CD8-positive, alpha-beta T cell (primary cell): ENCODE measurements at regions of chr13 and their contacts with region 1.

Region 1: GRCh38 chr13:48532506-48533499 is at the start of gene RCBTB2:
- DNase-seq: peak; percentile 95 to 100 (median 99)
- ATAC-seq: peak; percentile 89
- H3K4me3 ChIP-seq: peak within 1 kb of the TSS; percentile 88 to 93
- H3K4me3 Mint-ChIP-seq: peak within 1 kb of the TSS; percentile 96
- H3K27ac ChIP-seq: peak within 1 kb of the TSS; percentile 90 to 97
- H3K27ac Mint-ChIP-seq: peak within 1 kb of the TSS; percentile 99
- H3K4me1 ChIP-seq: peaks cover 14% of the 10 kb centered on the region
- H3K4me1 Mint-ChIP-seq: peaks cover 23% of the 10 kb centered on the region
- H3K27me3 ChIP-seq: no peaks in the 10 kb centered on the region
- H3K27me3 Mint-ChIP-seq: no peaks in the 10 kb centered on the region
- CTCF ChIP-seq: no peak
- total RNA-seq, gene RCBTB2: 1.5 to 2.0 TPM

Region 2: GRCh38 chr13:48094781-48095502 is 437.9 kb before region 1 on chr13 and contains the start of gene MED4:
- CTCF ChIA-PET with region 1: no interaction called
- POLR2A ChIA-PET with region 1: interaction called, 3 read pairs
- intact Hi-C with region 1: loop called (anchors 2 to 10 kb)
- DNase-seq: peak; percentile 96 to 99 (median 97)
- ATAC-seq: peak; percentile 98
- H3K4me3 ChIP-seq: peak within 1 kb of the TSS; percentile 90 to 96
- H3K4me3 Mint-ChIP-seq: peak within 1 kb of the TSS; percentile 96
- H3K27ac ChIP-seq: peak within 1 kb of the TSS; percentile 90 to 92
- H3K27ac Mint-ChIP-seq: peak within 1 kb of the TSS; percentile 97
- H3K4me1 ChIP-seq: peaks cover 21% of the 10 kb centered on the region
- H3K4me1 Mint-ChIP-seq: peaks cover 45% of the 10 kb centered on the region
- H3K27me3 ChIP-seq: no peaks in the 10 kb centered on the region
- H3K27me3 Mint-ChIP-seq: no peaks in the 10 kb centered on the region
- CTCF ChIP-seq: peak; percentile 100
- total RNA-seq, gene MED4: 60.8 to 63.6 TPM

Region 3: GRCh38 chr13:48370815-48371214 is 162.0 kb before region 1 on chr13:
- CTCF ChIA-PET with region 1: no interaction called
- POLR2A ChIA-PET with region 1: no interaction called
- intact Hi-C with region 1: no loop called
- DNase-seq: no peak
- ATAC-seq: no peak
- H3K4me3 ChIP-seq: no peak overlapping the region
- H3K4me3 Mint-ChIP-seq: no peak overlapping the region
- H3K27ac ChIP-seq: no peak overlapping the region
- H3K27ac Mint-ChIP-seq: no peak overlapping the region
- H3K4me1 ChIP-seq: no peaks in the 10 kb centered on the region
- H3K4me1 Mint-ChIP-seq: no peaks in the 10 kb centered on the region
- H3K27me3 ChIP-seq: no peaks in the 10 kb centered on the region
- H3K27me3 Mint-ChIP-seq: no peaks in the 10 kb centered on the region
- CTCF ChIP-seq: no peak

Region 4: GRCh38 chr13:48492470-48493065 is 40.2 kb before region 1 on chr13:
- CTCF ChIA-PET with region 1: interaction called, 3 read pairs
- POLR2A ChIA-PET with region 1: interaction called, 15 read pairs
- intact Hi-C with region 1: loop called (anchors 1 to 5 kb)
- DNase-seq: peak; percentile 27 to 92 (median 73)
- ATAC-seq: peak; percentile 82
- H3K4me3 ChIP-seq: peak overlapping the region; percentile 48 to 60
- H3K4me3 Mint-ChIP-seq: no peak overlapping the region
- H3K27ac ChIP-seq: peak overlapping the region; percentile 63 to 86
- H3K27ac Mint-ChIP-seq: no peak overlapping the region
- H3K4me1 ChIP-seq: peaks cover 58% of the 10 kb centered on the region
- H3K4me1 Mint-ChIP-seq: peaks cover 39% of the 10 kb centered on the region
- H3K27me3 ChIP-seq: no peaks in the 10 kb centered on the region
- H3K27me3 Mint-ChIP-seq: no peaks in the 10 kb centered on the region
- CTCF ChIP-seq: no peak

Region 5: GRCh38 chr13:48515732-48516131 is 17.1 kb before region 1 on chr13:
- CTCF ChIA-PET with region 1: interaction called, 4 read pairs
- POLR2A ChIA-PET with region 1: interaction called, 12 read pairs
- intact Hi-C with region 1: no loop called
- DNase-seq: no peak
- ATAC-seq: no peak
- H3K4me3 ChIP-seq: no peak overlapping the region
- H3K4me3 Mint-ChIP-seq: no peak overlapping the region
- H3K27ac ChIP-seq: no peak overlapping the region
- H3K27ac Mint-ChIP-seq: no peak overlapping the region
- H3K4me1 ChIP-seq: no peaks in the 10 kb centered on the region
- H3K4me1 Mint-ChIP-seq: peaks cover under 1% of the 10 kb centered on the region
- H3K27me3 ChIP-seq: no peaks in the 10 kb centered on the region
- H3K27me3 Mint-ChIP-seq: no peaks in the 10 kb centered on the region
- CTCF ChIP-seq: no peak

Region 6: DNA sequence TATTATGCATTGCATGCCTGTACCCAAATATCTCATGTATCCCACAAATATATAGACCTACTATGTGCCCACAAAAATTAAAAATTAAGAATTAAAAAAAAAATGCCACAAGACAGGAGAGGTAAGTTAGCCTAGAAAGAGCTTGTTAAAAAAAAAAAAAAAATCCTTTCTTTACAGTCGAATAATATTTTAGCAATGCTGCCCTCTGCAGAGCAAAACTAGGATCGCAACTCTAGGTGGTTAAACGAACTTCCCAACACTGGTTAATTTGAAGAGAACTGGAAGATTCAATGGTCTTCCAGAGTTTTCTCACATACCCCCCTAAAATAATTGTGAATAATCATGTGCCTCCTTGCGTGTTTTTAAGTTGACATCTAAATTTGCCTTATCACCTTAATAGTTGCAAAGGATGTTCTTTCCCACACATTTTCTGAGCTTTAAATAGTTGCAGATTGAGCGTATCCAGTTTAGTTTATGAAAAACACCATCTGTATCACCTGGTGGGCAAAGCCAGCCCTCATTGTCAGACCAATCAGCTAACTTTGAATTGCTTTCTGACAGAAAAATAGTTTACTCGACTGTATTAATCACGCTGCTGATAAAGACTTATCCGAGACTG is 47.5 kb after region 1 on chr13:
- CTCF ChIA-PET with region 1: interaction called, 13 read pairs
- POLR2A ChIA-PET with region 1: no interaction called
- intact Hi-C with region 1: loop called in 1 of 2 experiments (anchors 1 kb)
- DNase-seq: peak; percentile 50 to 82 (median 79)
- ATAC-seq: peak; percentile 79
- H3K4me3 ChIP-seq: no peak overlapping the region
- H3K4me3 Mint-ChIP-seq: no peak overlapping the region
- H3K27ac ChIP-seq: no peak overlapping the region
- H3K27ac Mint-ChIP-seq: no peak overlapping the region
- H3K4me1 ChIP-seq: no peaks in the 10 kb centered on the region
- H3K4me1 Mint-ChIP-seq: peaks cover 3% of the 10 kb centered on the region
- H3K27me3 ChIP-seq: no peaks in the 10 kb centered on the region
- H3K27me3 Mint-ChIP-seq: peaks cover 30% of the 10 kb centered on the region
- CTCF ChIP-seq: peak; percentile 85

Region 7: DNA sequence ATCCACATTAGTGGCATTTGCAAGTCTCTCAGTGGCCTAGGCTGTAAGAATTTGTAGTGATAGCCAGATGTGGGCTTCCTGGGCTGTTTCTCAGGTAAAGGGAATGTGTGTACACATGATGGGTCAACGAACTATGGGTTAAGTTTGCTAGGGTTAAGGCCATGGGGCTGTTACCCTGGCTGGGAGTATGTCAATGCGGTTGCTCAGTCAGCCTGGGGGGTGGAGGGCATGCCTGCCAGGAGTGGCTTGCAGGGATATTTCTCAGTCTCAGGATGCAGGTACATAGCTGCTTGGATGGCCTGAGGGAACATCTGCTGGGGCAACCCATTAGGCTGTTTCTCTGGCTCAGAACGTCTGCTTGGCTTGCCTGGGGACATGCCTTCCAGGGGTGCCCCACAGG is 134.4 kb after region 1 on chr13:
- CTCF ChIA-PET with region 1: no interaction called
- POLR2A ChIA-PET with region 1: no interaction called
- intact Hi-C with region 1: no loop called
- DNase-seq: no peak
- ATAC-seq: no peak
- H3K4me3 ChIP-seq: no peak overlapping the region
- H3K4me3 Mint-ChIP-seq: no peak overlapping the region
- H3K27ac ChIP-seq: no peak overlapping the region
- H3K27ac Mint-ChIP-seq: no peak overlapping the region
- H3K4me1 ChIP-seq: no peaks in the 10 kb centered on the region
- H3K4me1 Mint-ChIP-seq: peaks cover 16% of the 10 kb centered on the region
- H3K27me3 ChIP-seq: no peaks in the 10 kb centered on the region
- H3K27me3 Mint-ChIP-seq: no peaks in the 10 kb centered on the region
- CTCF ChIP-seq: no peak

Region 8: DNA sequence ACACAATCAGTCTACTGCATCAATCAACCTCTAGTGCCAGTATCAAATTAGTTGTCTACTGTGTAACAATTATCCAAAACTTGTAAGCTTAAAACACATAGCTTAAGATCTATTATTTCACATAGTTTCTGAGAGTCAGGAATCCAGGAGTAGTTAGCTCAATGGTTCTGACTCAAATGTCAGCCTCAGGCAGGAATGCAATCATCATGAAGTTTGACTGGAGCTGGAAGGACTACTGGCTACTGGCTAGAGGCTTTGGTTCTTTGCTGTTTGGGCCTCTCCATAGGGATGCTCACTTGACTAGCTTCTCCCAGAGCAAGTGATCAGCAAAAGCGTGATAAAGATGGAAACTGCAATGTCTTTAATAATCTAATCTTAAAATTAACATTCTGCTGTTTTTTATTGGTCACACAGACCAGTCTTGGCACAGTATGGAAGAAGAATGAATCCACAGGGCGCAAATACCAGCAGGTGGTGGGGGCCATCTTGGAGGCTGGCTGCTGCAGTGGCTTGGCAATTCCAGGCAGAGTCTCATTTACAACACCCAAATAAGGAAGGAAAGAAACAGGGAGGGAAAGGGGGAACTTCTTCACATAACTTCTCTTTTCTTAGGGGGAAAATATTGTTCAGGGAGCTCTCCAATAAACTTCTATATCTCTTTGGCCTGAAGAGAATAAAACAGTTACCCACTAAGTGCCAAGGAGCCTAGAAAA is 895.4 kb after region 1 on chr13:
- CTCF ChIA-PET with region 1: no interaction called
- POLR2A ChIA-PET with region 1: no interaction called
- intact Hi-C with region 1: no loop called
- DNase-seq: no peak
- ATAC-seq: no peak
- H3K4me3 ChIP-seq: no peak overlapping the region
- H3K4me3 Mint-ChIP-seq: no peak overlapping the region
- H3K27ac ChIP-seq: no peak overlapping the region
- H3K27ac Mint-ChIP-seq: no peak overlapping the region
- H3K4me1 ChIP-seq: no peaks in the 10 kb centered on the region
- H3K4me1 Mint-ChIP-seq: no peaks in the 10 kb centered on the region
- H3K27me3 ChIP-seq: no peaks in the 10 kb centered on the region
- H3K27me3 Mint-ChIP-seq: no peaks in the 10 kb centered on the region
- CTCF ChIP-seq: no peak

Region 9: GRCh38 chr13:49495783-49496762 is 963.3 kb after region 1 on chr13 and contains the start of gene PHF11:
- CTCF ChIA-PET with region 1: no interaction called
- POLR2A ChIA-PET with region 1: no interaction called
- intact Hi-C with region 1: loop called in 1 of 2 experiments (anchors 5 kb)
- DNase-seq: peak; percentile 67 to 94 (median 87)
- ATAC-seq: peak; percentile 80
- H3K4me3 ChIP-seq: peak within 1 kb of the TSS; percentile 68 to 88
- H3K4me3 Mint-ChIP-seq: peak within 1 kb of the TSS; percentile 96
- H3K27ac ChIP-seq: peak within 1 kb of the TSS; percentile 90 to 96
- H3K27ac Mint-ChIP-seq: peak within 1 kb of the TSS; percentile 99
- H3K4me1 ChIP-seq: peaks cover 20% of the 10 kb centered on the region
- H3K4me1 Mint-ChIP-seq: peaks cover 47% of the 10 kb centered on the region
- H3K27me3 ChIP-seq: no peaks in the 10 kb centered on the region
- H3K27me3 Mint-ChIP-seq: no peaks in the 10 kb centered on the region
- CTCF ChIP-seq: no peak
- total RNA-seq, gene PHF11: 93.9 to 98.3 TPM